ENCODE measurements at regions of chr18 and their contacts with region 1.

Region 1: GRCh38 chr18:2898186-2898640 is 51.4 kb downstream of the EMILIN2 start:
- DNase-seq: peak in 2 of 5 donors; percentile 56 to 68
- ATAC-seq: peak in 2 of 4 donors; percentile 7 to 16
- H3K4me3 ChIP-seq: no peak overlapping the region
- H3K27ac ChIP-seq: peak overlapping the region in 6 of 12 donors; percentile 1 to 64 (median 22)
- H3K4me1 ChIP-seq: peaks cover 5 to 61% (median 39%) of the 10 kb centered on the region in 12 donors
- H3K27me3 ChIP-seq: no peaks in the 10 kb centered on the region
- CTCF ChIP-seq: no peak
- POLR2A ChIP-seq: no peak

Region 2: DNA sequence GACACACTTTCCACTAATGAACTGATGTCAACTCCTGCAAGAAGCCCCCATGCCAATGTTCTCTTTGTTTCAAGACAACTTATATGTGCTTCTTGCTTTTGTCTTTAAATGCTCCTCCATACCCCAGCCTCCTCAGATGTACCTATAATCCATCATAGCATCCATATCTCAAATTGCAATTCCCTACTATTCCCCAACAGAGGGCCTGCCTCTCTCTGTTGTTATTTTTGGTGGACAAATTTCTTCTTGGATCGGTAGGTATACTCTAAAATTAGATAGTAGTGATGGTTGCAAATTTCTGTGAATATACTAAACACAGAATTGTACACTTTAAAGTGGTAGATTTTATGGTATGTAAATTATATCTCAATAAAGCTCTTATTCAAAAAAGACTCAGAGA is 1147.0 kb before region 1 on chr18:
- intact Hi-C with region 1: no loop called
- DNase-seq: no peak
- ATAC-seq: no peak
- H3K4me3 ChIP-seq: no peak overlapping the region
- H3K27ac ChIP-seq: no peak overlapping the region
- H3K4me1 ChIP-seq: no peaks in the 10 kb centered on the region
- H3K27me3 ChIP-seq: no peaks in the 10 kb centered on the region
- CTCF ChIP-seq: no peak
- POLR2A ChIP-seq: no peak

Region 3: GRCh38 chr18:2564373-2564772 is 333.8 kb before region 1 on chr18:
- intact Hi-C with region 1: loop called in 1 of 10 experiments (anchors 10 kb)
- DNase-seq: no peak
- ATAC-seq: no peak
- H3K4me3 ChIP-seq: no peak overlapping the region
- H3K27ac ChIP-seq: no peak overlapping the region
- H3K4me1 ChIP-seq: peaks cover 0 to 3% (median 0%) of the 10 kb centered on the region in 12 donors
- H3K27me3 ChIP-seq: no peaks in the 10 kb centered on the region
- CTCF ChIP-seq: no peak
- POLR2A ChIP-seq: no peak

Region 4: GRCh38 chr18:2758309-2758708 is 139.9 kb before region 1 on chr18:
- intact Hi-C with region 1: no loop called
- DNase-seq: no peak
- ATAC-seq: no peak
- H3K4me3 ChIP-seq: no peak overlapping the region
- H3K27ac ChIP-seq: no peak overlapping the region
- H3K4me1 ChIP-seq: no peaks in the 10 kb centered on the region
- H3K27me3 ChIP-seq: no peaks in the 10 kb centered on the region
- CTCF ChIP-seq: no peak
- POLR2A ChIP-seq: no peak

Region 5: GRCh38 chr18:2846636-2847364 is 51.4 kb before region 1 on chr18 and contains the start of gene EMILIN2:
- intact Hi-C with region 1: loop called in 5 of 10 experiments (anchors 2 to 10 kb)
- DNase-seq: peak; percentile 74 to 91 (median 82)
- ATAC-seq: peak in 3 of 4 donors; percentile 44 to 65 (median 45)
- H3K4me3 ChIP-seq: peak within 1 kb of the TSS; percentile 48 to 82 (median 62)
- H3K27ac ChIP-seq: peak within 1 kb of the TSS; percentile 2 to 93 (median 70)
- H3K4me1 ChIP-seq: peaks cover 0 to 50% (median 14%) of the 10 kb centered on the region in 12 donors
- H3K27me3 ChIP-seq: peaks cover 0 to 36% (median 17%) of the 10 kb centered on the region in 9 donors
- CTCF ChIP-seq: no peak
- POLR2A ChIP-seq: no peak
- total RNA-seq, gene EMILIN2: 17.8 to 71.3 (median 22.6) TPM

Region 6: DNA sequence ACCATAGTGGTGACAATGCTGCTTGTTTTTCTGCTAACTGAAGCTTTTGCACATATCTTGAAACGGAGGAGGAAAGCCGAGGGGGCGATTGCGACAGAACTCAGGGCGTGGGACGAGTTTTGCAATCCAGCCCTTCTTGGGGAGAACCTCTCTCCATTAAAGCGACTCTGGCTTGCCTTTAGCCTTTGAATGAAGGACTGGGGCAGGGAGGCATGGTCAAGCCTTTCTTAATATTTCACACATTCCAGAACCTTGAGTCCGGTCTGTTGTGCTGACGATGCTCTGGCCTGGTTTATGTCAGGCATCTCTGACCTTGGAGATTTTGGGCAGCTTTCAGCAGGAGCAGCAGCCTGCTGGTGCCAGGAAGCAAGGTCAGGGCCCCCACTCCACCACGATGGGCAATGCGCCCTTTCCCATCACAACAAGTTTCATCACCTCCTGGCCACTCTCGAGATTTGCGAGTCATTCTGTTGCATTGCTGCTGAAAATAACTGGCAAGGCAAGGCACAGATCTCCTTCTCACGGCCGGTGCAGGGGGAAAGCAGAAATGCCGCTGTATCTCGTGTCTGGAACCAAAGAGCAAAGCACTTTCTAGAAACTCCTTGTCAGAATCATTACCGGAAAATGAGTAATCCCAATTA is 40.6 kb before region 1 on chr18:
- intact Hi-C with region 1: loop called in 3 of 10 experiments (anchors 2 to 5 kb)
- DNase-seq: peak; percentile 71 to 87 (median 83)
- ATAC-seq: peak; percentile 75 to 96 (median 91)
- H3K4me3 ChIP-seq: peak overlapping the region in 6 of 12 donors; percentile 2 to 18 (median 12)
- H3K27ac ChIP-seq: peak overlapping the region; percentile 15 to 86 (median 75)
- H3K4me1 ChIP-seq: peaks cover 0 to 46% (median 15%) of the 10 kb centered on the region in 12 donors
- H3K27me3 ChIP-seq: no peaks in the 10 kb centered on the region
- CTCF ChIP-seq: no peak
- POLR2A ChIP-seq: peak in 1 of 2 donors; percentile 12